Aorta (tissue), 5 donors: ENCODE measurements at regions of chr2 and their contacts with region 1.

Region 1: GRCh38 chr2:88590998-88591613 is 36.2 kb downstream of the EIF2AK3 start:
- DNase-seq: no peak
- ATAC-seq: peak; percentile 81
- H3K4me3 ChIP-seq: no peak overlapping the region
- H3K27ac ChIP-seq: no peak overlapping the region
- H3K4me1 ChIP-seq: no peaks in the 10 kb centered on the region
- H3K27me3 ChIP-seq: no peaks in the 10 kb centered on the region

Region 2: DNA sequence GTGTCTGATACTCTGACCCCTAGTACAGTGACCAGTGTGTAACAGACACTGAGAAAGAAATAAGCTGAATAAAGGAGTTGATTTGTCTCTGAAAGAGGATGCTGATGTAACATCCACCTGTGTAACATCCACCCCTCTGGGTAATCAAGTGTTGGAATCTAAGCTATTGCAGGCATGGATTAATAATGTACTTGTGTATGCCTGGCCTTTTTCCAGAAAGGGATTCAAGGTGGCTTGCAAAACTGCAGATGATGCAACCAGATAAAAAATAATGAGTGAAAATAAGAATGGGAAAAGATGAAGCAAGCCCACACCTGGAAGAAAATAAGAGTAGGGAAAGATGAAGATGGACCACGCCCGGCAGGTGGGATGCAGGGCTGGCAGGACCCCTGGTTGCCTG is 90.4 kb before region 1 on chr2:
- intact Hi-C with region 1: no loop called
- DNase-seq: no peak
- ATAC-seq: no peak
- H3K4me3 ChIP-seq: no peak overlapping the region
- H3K27ac ChIP-seq: no peak overlapping the region
- H3K4me1 ChIP-seq: no peaks in the 10 kb centered on the region
- H3K27me3 ChIP-seq: no peaks in the 10 kb centered on the region

Region 3: DNA sequence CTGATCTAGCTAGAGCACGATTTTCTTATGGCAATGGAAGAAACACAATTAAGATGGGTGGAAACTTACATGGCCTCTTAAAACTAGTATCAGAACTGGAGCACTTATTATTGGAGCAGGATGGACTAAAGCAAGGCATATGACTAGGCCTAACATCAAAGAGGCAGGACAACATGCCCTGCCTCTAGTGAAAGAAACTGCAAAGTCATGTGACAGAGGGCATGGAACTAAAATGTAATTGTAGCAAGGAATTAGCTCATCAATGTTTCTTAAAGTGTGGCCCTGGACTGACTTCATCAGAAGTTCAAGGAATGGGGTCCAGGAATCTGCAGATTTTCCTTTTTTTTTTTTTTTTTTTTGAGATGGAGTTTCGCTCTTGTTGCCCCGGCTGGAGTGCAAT is 41.5 kb after region 1 on chr2:
- intact Hi-C with region 1: loop called (anchors 5 kb)
- DNase-seq: no peak
- ATAC-seq: no peak
- H3K4me3 ChIP-seq: no peak overlapping the region
- H3K27ac ChIP-seq: no peak overlapping the region
- H3K4me1 ChIP-seq: no peaks in the 10 kb centered on the region
- H3K27me3 ChIP-seq: no peaks in the 10 kb centered on the region

Region 4: DNA sequence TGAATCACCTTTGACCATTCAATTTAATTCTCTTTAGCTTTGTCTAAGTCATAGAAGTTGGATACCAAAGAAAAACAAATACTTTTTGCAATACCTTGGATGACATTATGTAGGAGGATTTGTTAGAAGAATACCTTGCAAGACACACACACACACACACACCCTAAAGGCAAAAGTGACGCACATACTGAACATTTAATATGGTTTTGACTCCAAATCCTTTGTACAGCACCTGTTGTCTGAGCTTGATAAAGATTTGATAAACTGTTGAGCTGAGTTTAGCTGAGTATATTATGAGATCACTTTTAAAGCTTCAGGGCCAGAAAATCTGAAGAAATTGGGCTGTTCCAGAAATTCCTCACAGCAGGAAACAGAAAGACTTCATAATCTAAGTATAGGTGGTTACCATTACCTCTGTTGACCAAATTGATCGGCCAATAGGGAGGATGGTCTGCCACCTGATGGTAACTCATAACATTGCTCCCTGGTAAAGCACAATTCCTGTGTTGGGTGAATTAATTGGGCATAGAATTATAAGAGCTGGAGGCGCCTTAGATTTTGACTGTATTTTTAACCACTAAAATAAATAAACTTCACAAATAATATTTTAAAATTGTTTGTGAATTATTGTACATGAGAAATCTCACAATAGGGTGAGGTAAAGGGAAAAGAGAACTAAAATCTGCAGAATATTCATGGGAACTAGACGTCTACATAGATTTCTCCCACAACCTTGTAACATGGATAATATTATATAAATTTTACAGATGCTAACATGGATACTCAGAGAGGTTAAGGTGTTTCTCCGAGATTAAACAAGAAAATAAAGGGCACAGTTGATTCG is 78.5 kb after region 1 on chr2:
- intact Hi-C with region 1: loop called (anchors 1 to 2 kb)
- DNase-seq: no peak
- ATAC-seq: no peak
- H3K4me3 ChIP-seq: no peak overlapping the region
- H3K27ac ChIP-seq: no peak overlapping the region
- H3K4me1 ChIP-seq: no peaks in the 10 kb centered on the region
- H3K27me3 ChIP-seq: no peaks in the 10 kb centered on the region